SK-MEL-5 (cell line): ENCODE measurements at regions of chr17 and their contacts with region 1.

Region 1: GRCh38 chr17:55770148-55770870 is 19.5 kb downstream of the PCTP start:
- DNase-seq: peak; percentile 83

Region 2: DNA sequence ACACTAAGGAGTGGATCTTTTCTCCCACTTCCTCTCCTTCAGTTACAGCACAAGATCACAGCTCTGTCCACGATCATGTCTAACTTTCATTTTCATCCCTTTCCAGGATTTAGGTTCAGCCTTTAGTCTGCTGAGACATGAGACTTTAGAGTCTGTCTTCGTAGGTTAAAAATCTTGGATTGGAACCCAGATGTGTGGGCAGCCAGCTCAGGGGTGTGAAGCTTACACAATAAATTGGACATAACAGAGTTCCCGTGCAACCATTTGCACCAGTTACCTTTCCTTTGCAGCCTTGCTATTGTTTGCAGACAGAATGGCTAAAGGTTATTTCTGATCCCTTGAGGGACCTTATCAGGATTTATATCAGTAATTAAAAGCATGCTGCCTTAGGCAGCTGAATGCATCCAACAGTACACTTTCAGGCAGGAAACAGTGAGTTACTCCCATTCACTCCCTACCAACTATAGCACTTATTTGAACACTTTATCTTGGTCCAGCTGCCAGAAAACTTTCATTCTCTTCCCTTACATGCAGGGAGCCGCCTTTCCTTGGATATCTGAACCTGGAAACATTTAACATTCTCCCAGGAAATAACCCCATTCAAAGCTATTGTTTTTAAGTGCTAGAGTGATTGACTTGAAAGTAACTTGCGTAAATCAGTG is 134.9 kb before region 1 on chr17:
- in situ Hi-C with region 1: loop called (anchors 5 kb)
- DNase-seq: peak; percentile 17